Dendritic cell treated with granulocyte-macrophage colony-stimulating factor and Interleukin-4, amounts not matched to agents 40 ng/mL and 50 ng/mL, for 4 days (primary cell): ENCODE measurements at regions of chr18 and their contacts with region 1.

Region 1: DNA sequence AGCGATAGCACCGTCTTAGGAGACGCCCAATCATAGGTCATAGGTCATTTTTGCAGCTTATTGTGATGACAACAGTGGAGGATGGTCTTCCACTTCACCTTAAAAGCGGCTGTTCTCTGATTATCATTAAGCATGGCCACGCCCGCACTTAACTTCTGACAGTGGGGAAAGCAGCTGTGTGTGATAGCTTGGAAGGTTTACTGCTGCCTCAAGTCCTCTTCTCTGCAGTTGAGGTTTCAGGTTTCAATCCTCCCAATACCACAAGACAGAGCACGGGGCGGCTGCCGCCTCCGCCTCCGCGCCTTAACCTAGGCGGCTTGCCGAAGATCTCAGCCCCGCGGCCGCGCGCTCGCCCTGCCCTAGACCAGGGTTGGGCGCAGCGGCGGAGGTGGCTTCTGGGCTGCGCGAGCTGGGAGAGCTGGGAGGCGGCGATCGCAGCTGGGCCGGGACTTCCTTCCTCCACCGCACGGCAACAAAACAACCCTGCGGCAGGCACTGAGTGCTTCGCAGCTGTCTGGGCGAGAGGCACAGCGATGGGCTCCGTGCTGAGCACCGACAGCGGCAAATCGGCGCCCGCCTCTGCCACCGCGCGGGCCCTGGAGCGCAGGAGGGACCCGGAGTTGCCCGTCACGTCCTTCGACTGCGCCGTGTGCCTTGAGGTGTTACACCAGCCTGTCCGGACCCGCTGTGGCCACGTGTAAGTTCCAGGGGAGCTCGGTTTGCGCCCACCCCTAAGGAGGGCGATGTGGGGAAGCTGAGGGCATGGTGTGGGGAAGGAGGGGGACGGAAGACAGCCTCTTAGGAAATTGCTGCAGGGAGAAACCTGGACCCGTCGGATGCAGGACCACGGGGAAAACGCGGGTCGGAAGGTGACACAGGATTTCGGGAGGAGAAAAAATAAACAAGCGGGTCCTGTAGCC is at the start of gene RNF125:
- H3K4me3 Mint-ChIP-seq: peak within 1 kb of the TSS; percentile 96
- H3K27ac Mint-ChIP-seq: peak within 1 kb of the TSS; percentile 97
- H3K4me1 Mint-ChIP-seq: peaks cover 33% of the 10 kb centered on the region
- H3K27me3 Mint-ChIP-seq: no peaks in the 10 kb centered on the region

Region 2: GRCh38 chr18:32072321-32072720 is 53.7 kb after region 1 on chr18:
- intact Hi-C with region 1: loop called (anchors 10 kb)
- H3K4me3 Mint-ChIP-seq: no peak overlapping the region
- H3K27ac Mint-ChIP-seq: no peak overlapping the region
- H3K4me1 Mint-ChIP-seq: peaks cover 4% of the 10 kb centered on the region
- H3K27me3 Mint-ChIP-seq: no peaks in the 10 kb centered on the region